PC-9 (cell line): ENCODE measurements at regions of chr7 and their contacts with region 1.

Region 1: GRCh38 chr7:82740246-82740848 is 296.8 kb upstream of the CACNA2D1 start:
- DNase-seq: peak; percentile 39 to 55
- H3K4me3 ChIP-seq: no peak overlapping the region
- H3K27ac ChIP-seq: no peak overlapping the region
- H3K4me1 ChIP-seq: no peaks in the 10 kb centered on the region
- H3K27me3 ChIP-seq: no peaks in the 10 kb centered on the region
- CTCF ChIP-seq: peak; percentile 81

Region 2: DNA sequence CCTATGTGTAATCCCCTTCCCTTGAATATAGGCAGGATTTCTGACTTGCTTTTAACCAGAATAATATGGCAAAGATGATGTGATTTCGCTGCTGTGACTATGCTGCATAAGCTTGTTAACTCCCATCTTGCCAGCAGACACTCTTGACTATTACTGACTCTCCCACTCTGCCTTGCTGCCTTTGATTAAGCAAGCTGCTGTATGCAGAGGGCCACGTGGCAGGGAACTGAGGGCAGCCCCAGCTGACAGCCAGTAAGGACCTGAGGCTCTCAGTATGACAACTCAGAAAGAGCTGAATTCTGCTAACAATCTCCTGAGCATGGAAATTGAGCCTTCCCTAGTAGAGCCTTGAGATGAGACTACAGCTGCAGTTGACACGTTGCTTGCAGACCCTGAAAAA is 17.4 kb before region 1 on chr7:
- CTCF ChIA-PET with region 1: no interaction called
- POLR2A ChIA-PET with region 1: no interaction called
- intact Hi-C with region 1: no loop called
- DNase-seq: no peak
- H3K4me3 ChIP-seq: no peak overlapping the region
- H3K27ac ChIP-seq: no peak overlapping the region
- H3K4me1 ChIP-seq: no peaks in the 10 kb centered on the region; the same call in 1 of the 2 replicates
- H3K27me3 ChIP-seq: no peaks in the 10 kb centered on the region
- CTCF ChIP-seq: no peak

Region 3: GRCh38 chr7:82810558-82811259 is 70.4 kb after region 1 on chr7:
- CTCF ChIA-PET with region 1: no interaction called
- POLR2A ChIA-PET with region 1: no interaction called
- intact Hi-C with region 1: loop called (anchors 5 kb)
- DNase-seq: peak in 1 of 2 experiments; percentile 9
- H3K4me3 ChIP-seq: no peak overlapping the region
- H3K27ac ChIP-seq: no peak overlapping the region
- H3K4me1 ChIP-seq: 0 out of 2 replicates have a peak, but pooled peaks cover 3% of the 10 kb centered on the region
- H3K27me3 ChIP-seq: no peaks in the 10 kb centered on the region
- CTCF ChIP-seq: peak; percentile 79

Region 4: GRCh38 chr7:83072576-83073517 is 332.5 kb after region 1 on chr7:
- CTCF ChIA-PET with region 1: no interaction called
- POLR2A ChIA-PET with region 1: no interaction called
- intact Hi-C with region 1: loop called (anchors 2 kb)
- DNase-seq: no peak
- H3K4me3 ChIP-seq: no peak overlapping the region
- H3K27ac ChIP-seq: no peak overlapping the region
- H3K4me1 ChIP-seq: no peaks in the 10 kb centered on the region
- H3K27me3 ChIP-seq: no peaks in the 10 kb centered on the region
- CTCF ChIP-seq: peak; percentile 39; the same call in 1 of the 2 replicates

Region 5: DNA sequence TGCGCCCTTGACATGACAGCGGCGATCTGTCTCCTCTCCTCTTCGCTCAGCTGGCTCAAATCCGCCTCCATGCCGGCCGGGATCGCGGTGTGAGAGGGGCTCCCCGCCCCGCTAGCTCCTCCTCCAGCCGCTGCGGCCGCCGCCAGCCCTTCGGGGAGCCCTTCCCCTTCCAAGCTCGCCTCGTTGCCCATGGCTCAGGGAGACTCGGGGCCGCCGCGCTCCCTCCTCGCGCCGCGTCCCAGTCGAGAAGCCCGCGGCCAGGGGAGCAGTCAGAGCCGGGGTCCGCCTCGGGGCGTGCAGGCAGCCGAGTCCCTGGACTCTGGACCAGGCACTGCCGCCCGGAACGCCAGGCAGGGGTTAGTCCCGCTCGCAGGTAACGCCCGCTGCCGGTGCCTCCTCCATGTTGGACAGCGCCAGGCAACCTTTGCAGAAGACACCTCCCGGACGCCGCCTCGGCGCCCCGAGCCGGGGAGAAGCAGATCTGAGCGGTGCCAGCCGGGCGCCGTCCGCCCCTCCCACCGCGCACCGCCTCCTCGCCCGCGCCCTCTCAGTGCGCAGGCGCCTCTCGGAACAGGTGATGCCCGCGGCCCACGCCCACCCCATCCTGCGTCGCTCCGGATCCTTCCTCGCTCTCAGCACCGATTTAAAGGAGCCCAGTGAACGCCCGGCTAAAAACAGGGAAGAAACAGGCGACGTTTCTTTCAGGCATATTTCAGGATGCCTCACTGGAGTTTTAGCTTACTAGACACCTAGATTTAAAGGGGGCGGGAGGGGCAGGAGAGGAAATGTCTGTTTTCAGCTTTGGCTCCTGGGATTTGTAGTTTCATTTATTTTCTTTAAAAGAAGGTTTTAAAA is 422.3 kb after region 1 on chr7 and contains the start of gene PCLO:
- CTCF ChIA-PET with region 1: no interaction called
- POLR2A ChIA-PET with region 1: no interaction called
- intact Hi-C with region 1: loop called (anchors 10 kb)
- DNase-seq: peak; percentile 87 to 98
- H3K4me3 ChIP-seq: peak within 1 kb of the TSS; percentile 98
- H3K27ac ChIP-seq: peak within 1 kb of the TSS; percentile 70
- H3K4me1 ChIP-seq: peaks cover 18% of the 10 kb centered on the region
- H3K27me3 ChIP-seq: no peaks in the 10 kb centered on the region
- CTCF ChIP-seq: no peak
- total RNA-seq, gene PCLO: 2.6 and 4.0 TPM in 2 replicates

Region 6: GRCh38 chr7:83201355-83201754 is 461.0 kb after region 1 on chr7:
- CTCF ChIA-PET with region 1: no interaction called
- POLR2A ChIA-PET with region 1: interaction called, 11 read pairs
- intact Hi-C with region 1: no loop called
- DNase-seq: no peak
- H3K4me3 ChIP-seq: no peak overlapping the region
- H3K27ac ChIP-seq: no peak overlapping the region
- H3K4me1 ChIP-seq: no peaks in the 10 kb centered on the region
- H3K27me3 ChIP-seq: no peaks in the 10 kb centered on the region
- CTCF ChIP-seq: no peak

Region 7: GRCh38 chr7:83365746-83366145 is 625.4 kb after region 1 on chr7:
- CTCF ChIA-PET with region 1: no interaction called
- POLR2A ChIA-PET with region 1: no interaction called
- intact Hi-C with region 1: loop called (anchors 1 kb)
- DNase-seq: no peak
- H3K4me3 ChIP-seq: no peak overlapping the region
- H3K27ac ChIP-seq: no peak overlapping the region
- H3K4me1 ChIP-seq: no peaks in the 10 kb centered on the region
- H3K27me3 ChIP-seq: no peaks in the 10 kb centered on the region
- CTCF ChIP-seq: peak; percentile 35; the same call in 1 of the 2 replicates